IMR-90 (cell line): ENCODE measurements at regions of chrX and their contacts with region 1.

Region 1: GRCh38 chrX:23901805-23902204 is 5.9 kb downstream of the APOO start:
- DNase-seq: peak; percentile 77
- ATAC-seq: peak; percentile 79
- H3K4me3 ChIP-seq: no peak overlapping the region
- H3K27ac ChIP-seq: no peak overlapping the region
- H3K4me1 ChIP-seq: peaks cover 4% of the 10 kb centered on the region
- H3K27me3 ChIP-seq: no peaks in the 10 kb centered on the region
- CTCF ChIP-seq: peak; percentile 63
- POLR2A ChIP-seq: no peak
- RAD21 ChIP-seq: peak; percentile 76

Region 2: DNA sequence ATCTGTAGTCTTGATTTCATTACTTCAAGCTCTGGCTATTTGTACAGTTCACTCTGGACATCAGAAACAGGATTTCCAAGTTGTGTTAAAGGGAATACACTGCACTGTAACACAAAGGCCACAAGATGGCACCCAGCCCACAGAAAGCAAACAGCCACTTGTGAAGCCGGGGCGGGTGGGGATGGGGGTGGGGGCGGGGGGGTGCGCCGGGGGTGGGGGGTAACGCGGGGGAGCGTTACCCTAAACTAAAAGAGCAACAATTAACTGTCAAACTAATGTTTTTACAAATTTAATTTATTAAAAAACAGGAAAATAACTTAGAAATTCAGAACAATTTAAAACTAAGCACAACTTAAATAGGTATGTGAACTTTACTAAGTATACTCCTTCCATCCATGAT is 207.2 kb before region 1 on chrX:
- CTCF ChIA-PET with region 1: interaction called, 8 read pairs
- POLR2A ChIA-PET with region 1: no interaction called
- dilution Hi-C with region 1: no loop called
- in situ Hi-C with region 1: loop called (anchors 5 kb)
- intact Hi-C with region 1: loop called (anchors 1 kb)
- DNase-seq: peak; percentile 57
- ATAC-seq: peak; percentile 96
- H3K4me3 ChIP-seq: no peak overlapping the region
- H3K27ac ChIP-seq: no peak overlapping the region
- H3K4me1 ChIP-seq: no peaks in the 10 kb centered on the region
- H3K27me3 ChIP-seq: no peaks in the 10 kb centered on the region
- CTCF ChIP-seq: peak; percentile 61
- POLR2A ChIP-seq: no peak
- RAD21 ChIP-seq: peak; percentile 66

Region 3: DNA sequence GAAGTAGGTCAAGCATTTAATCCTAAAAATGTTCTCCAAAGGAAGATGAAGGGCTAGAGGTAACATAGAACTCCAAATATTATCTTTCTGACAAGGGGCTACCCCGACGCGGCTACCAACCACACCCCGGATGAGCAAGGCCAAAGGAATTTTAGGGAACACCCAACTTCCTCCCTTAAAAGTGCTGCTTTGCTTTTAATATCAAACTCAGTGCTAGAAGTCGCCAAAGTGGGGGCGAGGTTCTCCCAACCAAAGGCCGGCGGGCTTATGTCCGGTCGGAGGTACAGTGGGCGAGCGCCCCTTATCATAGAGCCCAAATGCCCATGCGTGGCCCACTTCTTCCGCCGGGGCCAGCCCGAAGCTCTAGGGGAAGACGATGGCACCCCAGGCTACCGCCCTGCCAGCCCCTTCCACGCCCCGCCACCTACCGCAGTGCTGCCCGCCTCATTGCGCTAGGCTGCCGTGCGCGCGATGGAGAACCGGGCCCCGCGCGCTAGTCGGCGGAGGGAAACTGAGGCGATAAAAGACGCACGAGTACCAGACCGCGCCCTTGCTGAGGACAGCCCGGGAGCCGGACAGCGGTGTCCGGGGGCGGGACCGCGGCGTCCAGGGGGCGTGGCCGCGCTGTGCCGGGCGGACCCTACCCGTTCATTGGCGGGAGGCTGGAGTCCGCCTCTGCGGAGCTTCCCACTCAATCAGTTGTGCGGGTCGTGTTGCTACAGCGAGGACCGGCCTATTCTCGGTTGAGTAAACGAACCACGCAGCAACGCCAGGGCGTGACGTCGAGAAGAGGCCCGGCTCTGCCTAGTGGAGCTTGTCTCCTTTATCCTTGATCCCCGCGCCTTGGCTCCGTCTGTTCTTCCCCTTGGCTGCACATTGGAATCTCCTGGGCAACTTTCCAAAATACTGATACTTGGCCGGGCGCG is 158.8 kb before region 1 on chrX and contains the start of gene ACOT9:
- CTCF ChIA-PET with region 1: interaction called, 7 read pairs
- POLR2A ChIA-PET with region 1: interaction called, 4 read pairs
- dilution Hi-C with region 1: no loop called
- in situ Hi-C with region 1: loop called (anchors 10 kb)
- intact Hi-C with region 1: loop called (anchors 1 kb)
- DNase-seq: peak; percentile 95
- ATAC-seq: peak; percentile 98
- H3K4me3 ChIP-seq: peak within 1 kb of the TSS; percentile 94
- H3K27ac ChIP-seq: peak within 1 kb of the TSS; percentile 96
- H3K4me1 ChIP-seq: no peaks in the 10 kb centered on the region
- H3K27me3 ChIP-seq: no peaks in the 10 kb centered on the region
- CTCF ChIP-seq: no peak
- POLR2A ChIP-seq: peak; percentile 78
- RAD21 ChIP-seq: no peak
- total RNA-seq, gene ACOT9: 47.3 and 63.6 TPM in 2 replicates

Region 4: GRCh38 chrX:23756157-23756559 is 145.6 kb before region 1 on chrX:
- CTCF ChIA-PET with region 1: no interaction called
- POLR2A ChIA-PET with region 1: no interaction called
- dilution Hi-C with region 1: no loop called
- in situ Hi-C with region 1: no loop called
- intact Hi-C with region 1: loop called (anchors 1 kb)
- DNase-seq: peak; percentile 41
- ATAC-seq: no peak
- H3K4me3 ChIP-seq: no peak overlapping the region
- H3K27ac ChIP-seq: no peak overlapping the region
- H3K4me1 ChIP-seq: no peaks in the 10 kb centered on the region
- H3K27me3 ChIP-seq: no peaks in the 10 kb centered on the region
- CTCF ChIP-seq: peak; percentile 47
- POLR2A ChIP-seq: no peak
- RAD21 ChIP-seq: peak; percentile 35

Region 5: DNA sequence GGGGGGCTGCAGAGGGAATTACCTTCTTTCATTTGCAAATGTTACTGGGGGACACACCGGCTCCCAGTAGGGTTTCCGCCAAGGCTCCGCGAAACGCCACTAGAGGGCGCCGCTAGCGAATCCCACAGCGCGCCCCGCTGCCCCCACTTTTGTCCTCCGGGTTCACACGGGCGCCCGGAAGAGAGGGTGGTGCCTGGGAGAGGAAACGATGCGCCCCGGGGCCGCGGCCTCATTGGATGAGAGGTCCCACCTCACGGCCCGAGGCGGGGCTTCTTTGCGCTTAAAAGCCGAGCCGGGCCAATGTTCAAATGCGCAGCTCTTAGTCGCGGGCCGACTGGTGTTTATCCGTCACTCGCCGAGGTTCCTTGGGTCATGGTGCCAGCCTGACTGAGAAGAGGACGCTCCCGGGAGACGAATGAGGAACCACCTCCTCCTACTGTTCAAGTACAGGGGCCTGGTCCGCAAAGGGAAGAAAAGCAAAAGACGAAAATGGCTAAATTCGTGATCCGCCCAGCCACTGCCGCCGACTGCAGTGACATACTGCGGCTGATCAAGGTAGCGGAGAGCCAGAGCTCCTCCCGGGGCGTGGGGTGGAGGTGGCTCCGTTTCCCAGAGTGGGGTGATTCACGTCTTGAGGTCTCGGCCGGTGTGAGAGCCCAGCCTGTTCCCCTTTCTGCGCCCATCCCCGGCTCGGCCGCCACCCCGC is 118.8 kb before region 1 on chrX and contains the start of gene SAT1:
- CTCF ChIA-PET with region 1: interaction called, 34 read pairs
- POLR2A ChIA-PET with region 1: interaction called, 5 read pairs
- dilution Hi-C with region 1: no loop called
- in situ Hi-C with region 1: loop called (anchors 10 kb)
- intact Hi-C with region 1: loop called (anchors 1 kb)
- DNase-seq: peak; percentile 91
- ATAC-seq: peak; percentile 92
- H3K4me3 ChIP-seq: peak within 1 kb of the TSS; percentile 74
- H3K27ac ChIP-seq: peak within 1 kb of the TSS; percentile 78
- H3K4me1 ChIP-seq: no peaks in the 10 kb centered on the region; the same call in 1 of the 2 replicates
- H3K27me3 ChIP-seq: no peaks in the 10 kb centered on the region
- CTCF ChIP-seq: peak; percentile 69
- POLR2A ChIP-seq: peak; percentile 100
- RAD21 ChIP-seq: peak; percentile 58
- total RNA-seq, gene SAT1: 55.9 and 112 TPM in 2 replicates

Region 6: GRCh38 chrX:23888887-23889501 is 12.8 kb before region 1 on chrX:
- CTCF ChIA-PET with region 1: interaction called, 11 read pairs
- POLR2A ChIA-PET with region 1: no interaction called
- dilution Hi-C with region 1: no loop called
- in situ Hi-C with region 1: no loop called
- intact Hi-C with region 1: no loop called
- DNase-seq: peak; percentile 42
- ATAC-seq: peak; percentile 76
- H3K4me3 ChIP-seq: no peak overlapping the region
- H3K27ac ChIP-seq: no peak overlapping the region
- H3K4me1 ChIP-seq: no peaks in the 10 kb centered on the region
- H3K27me3 ChIP-seq: no peaks in the 10 kb centered on the region
- CTCF ChIP-seq: no peak
- POLR2A ChIP-seq: no peak
- RAD21 ChIP-seq: no peak